ENCODE measurements at regions of chr5 and their contacts with region 1.

Region 1: DNA sequence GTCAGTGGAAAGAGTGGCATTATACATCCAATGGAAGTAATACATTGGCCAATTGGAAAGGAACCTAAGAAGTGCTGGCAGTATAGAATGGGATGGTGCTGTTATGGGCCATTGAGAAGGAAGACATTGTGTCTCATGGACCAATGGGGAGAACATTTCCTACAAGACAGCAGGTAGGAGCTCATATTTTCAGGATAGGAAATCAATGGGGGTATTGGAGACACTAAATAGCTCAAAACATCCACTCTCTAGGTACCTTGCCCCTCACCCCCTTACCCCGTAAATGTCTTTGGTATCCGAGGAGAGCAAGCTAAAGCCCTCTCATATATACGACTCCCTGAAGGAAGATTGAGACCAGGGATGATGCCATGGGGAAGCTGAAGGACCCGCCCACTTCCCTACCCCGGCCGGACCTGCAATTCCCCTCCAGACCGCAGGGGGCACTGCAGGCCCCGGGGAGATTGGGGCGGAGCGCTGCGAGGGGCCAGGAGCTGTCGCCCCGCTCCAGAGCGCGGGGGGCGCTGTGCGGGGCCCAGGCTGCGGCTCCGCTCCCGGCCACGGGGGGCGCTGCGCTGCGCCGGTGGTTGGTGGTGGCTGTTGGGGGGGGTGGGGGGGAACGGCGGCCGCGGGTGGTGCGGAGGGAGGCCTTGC is at the start of gene KDM3B:
- DNase-seq: peak; percentile 86 to 96 (median 92)
- ATAC-seq: peak; percentile 89
- H3K4me3 ChIP-seq: peak within 1 kb of the TSS; percentile 87 to 97
- H3K4me3 Mint-ChIP-seq: peak within 1 kb of the TSS; percentile 97
- H3K27ac ChIP-seq: peak within 1 kb of the TSS; percentile 83 to 89
- H3K27ac Mint-ChIP-seq: peak within 1 kb of the TSS; percentile 97
- H3K4me1 ChIP-seq: peaks cover 34% of the 10 kb centered on the region
- H3K4me1 Mint-ChIP-seq: peaks cover 47% of the 10 kb centered on the region
- H3K27me3 ChIP-seq: no peaks in the 10 kb centered on the region
- H3K27me3 Mint-ChIP-seq: no peaks in the 10 kb centered on the region
- CTCF ChIP-seq: peak; percentile 99
- total RNA-seq, gene KDM3B: 60.2 to 60.3 TPM

Region 2: DNA sequence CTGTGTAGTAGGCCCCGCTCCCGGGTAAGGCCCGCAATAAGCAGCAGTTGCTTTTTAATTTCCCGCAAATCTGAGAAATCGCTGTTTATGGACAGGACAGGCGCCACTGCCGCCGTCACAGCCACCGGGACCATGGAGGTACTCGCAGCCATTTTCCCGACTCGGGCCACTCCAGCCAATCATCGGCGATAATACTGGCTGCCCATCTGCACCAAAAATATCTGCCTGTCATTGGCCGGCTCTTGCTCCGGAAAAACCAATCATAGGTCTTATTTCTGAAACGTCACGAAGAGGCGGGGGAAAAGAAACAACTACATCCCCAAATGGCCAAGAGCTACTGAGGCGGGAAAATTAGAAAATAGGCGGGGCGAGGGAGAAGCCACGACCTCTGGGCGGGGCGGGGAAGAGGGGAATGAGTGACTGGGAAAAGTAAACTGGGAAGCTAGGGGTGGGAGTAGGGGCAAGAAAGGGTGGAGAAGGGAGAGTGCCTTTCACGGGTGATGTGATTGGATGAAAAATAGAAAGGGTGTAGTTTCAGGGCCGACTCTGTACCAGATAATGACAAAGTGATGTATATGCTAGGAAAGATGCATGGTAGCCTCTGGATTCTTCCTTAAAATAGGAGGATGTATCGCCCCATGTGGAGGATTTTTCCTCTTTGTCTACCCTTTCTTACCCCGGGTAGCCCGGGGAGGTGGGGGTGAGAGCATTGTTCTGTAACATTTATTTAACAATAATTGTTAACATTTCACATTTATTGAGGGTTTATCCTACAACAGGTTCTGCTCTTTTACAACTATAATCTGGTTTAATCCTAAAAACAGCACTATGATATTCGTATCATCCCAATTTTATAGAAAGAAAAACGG is 138.8 kb before region 1 on chr5 and contains the start of gene CDC23:
- CTCF ChIA-PET with region 1: interaction called, 5 read pairs
- POLR2A ChIA-PET with region 1: interaction called, 5 read pairs
- intact Hi-C with region 1: loop called (anchors 2 to 5 kb)
- DNase-seq: peak; percentile 76 to 97 (median 89)
- ATAC-seq: peak; percentile 97
- H3K4me3 ChIP-seq: peak within 1 kb of the TSS; percentile 91 to 93
- H3K4me3 Mint-ChIP-seq: peak within 1 kb of the TSS; percentile 100
- H3K27ac ChIP-seq: peak within 1 kb of the TSS; percentile 81 to 86
- H3K27ac Mint-ChIP-seq: peak within 1 kb of the TSS; percentile 98
- H3K4me1 ChIP-seq: peaks cover 18% of the 10 kb centered on the region
- H3K4me1 Mint-ChIP-seq: peaks cover 21% of the 10 kb centered on the region
- H3K27me3 ChIP-seq: no peaks in the 10 kb centered on the region
- H3K27me3 Mint-ChIP-seq: peaks cover 2% of the 10 kb centered on the region
- CTCF ChIP-seq: no peak
- total RNA-seq, gene CDC23: 18.2 to 20.5 TPM

Region 3: GRCh38 chr5:138331449-138332368 is 20.5 kb before region 1 on chr5 and contains the start of gene CDC25C:
- CTCF ChIA-PET with region 1: interaction called, 154 read pairs
- POLR2A ChIA-PET with region 1: interaction called, 145 read pairs
- intact Hi-C with region 1: loop called (anchors 1 kb)
- DNase-seq: peak; percentile 91 to 99 (median 95)
- ATAC-seq: peak; percentile 100
- H3K4me3 ChIP-seq: peak within 1 kb of the TSS; percentile 52 to 69
- H3K4me3 Mint-ChIP-seq: peak within 1 kb of the TSS; percentile 86
- H3K27ac ChIP-seq: peak within 1 kb of the TSS in 1 of 2 experiments; percentile 58
- H3K27ac Mint-ChIP-seq: peak within 1 kb of the TSS; percentile 45
- H3K4me1 ChIP-seq: peaks cover 5% of the 10 kb centered on the region
- H3K4me1 Mint-ChIP-seq: peaks cover 16% of the 10 kb centered on the region
- H3K27me3 ChIP-seq: no peaks in the 10 kb centered on the region
- H3K27me3 Mint-ChIP-seq: no peaks in the 10 kb centered on the region
- CTCF ChIP-seq: no peak
- total RNA-seq, gene CDC25C: not detected

Region 4: GRCh38 chr5:138337685-138338410 is 14.3 kb before region 1 on chr5 and contains the start of gene FAM53C:
- CTCF ChIA-PET with region 1: interaction called, 154 read pairs
- POLR2A ChIA-PET with region 1: interaction called, 145 read pairs
- intact Hi-C with region 1: loop called (anchors 1 kb)
- DNase-seq: peak; percentile 88 to 98 (median 91)
- ATAC-seq: peak; percentile 84
- H3K4me3 ChIP-seq: peak within 1 kb of the TSS; percentile 69 to 85
- H3K4me3 Mint-ChIP-seq: peak within 1 kb of the TSS; percentile 93
- H3K27ac ChIP-seq: peak within 1 kb of the TSS; percentile 95 to 99
- H3K27ac Mint-ChIP-seq: peak within 1 kb of the TSS; percentile 100
- H3K4me1 ChIP-seq: peaks cover 23% of the 10 kb centered on the region
- H3K4me1 Mint-ChIP-seq: peaks cover 41% of the 10 kb centered on the region
- H3K27me3 ChIP-seq: no peaks in the 10 kb centered on the region
- H3K27me3 Mint-ChIP-seq: no peaks in the 10 kb centered on the region
- CTCF ChIP-seq: no peak
- total RNA-seq, gene FAM53C: 99.8 to 99.9 TPM

Region 5: GRCh38 chr5:138369706-138370105 is 17.5 kb after region 1 on chr5:
- CTCF ChIA-PET with region 1: interaction called, 58 read pairs
- POLR2A ChIA-PET with region 1: interaction called, 5 read pairs
- intact Hi-C with region 1: loop called in 1 of 2 experiments (anchors 2 kb)
- DNase-seq: peak in 1 of 9 experiments; percentile 13
- ATAC-seq: no peak
- H3K4me3 ChIP-seq: no peak overlapping the region
- H3K4me3 Mint-ChIP-seq: no peak overlapping the region
- H3K27ac ChIP-seq: no peak overlapping the region
- H3K27ac Mint-ChIP-seq: no peak overlapping the region
- H3K4me1 ChIP-seq: peaks cover 29% of the 10 kb centered on the region
- H3K4me1 Mint-ChIP-seq: peaks cover 56% of the 10 kb centered on the region
- H3K27me3 ChIP-seq: no peaks in the 10 kb centered on the region
- H3K27me3 Mint-ChIP-seq: no peaks in the 10 kb centered on the region
- CTCF ChIP-seq: no peak

Region 6: GRCh38 chr5:138725138-138725833 is 373.1 kb after region 1 on chr5:
- CTCF ChIA-PET with region 1: no interaction called
- POLR2A ChIA-PET with region 1: no interaction called
- intact Hi-C with region 1: no loop called
- DNase-seq: peak in 2 of 9 experiments; percentile 5 to 15
- ATAC-seq: no peak
- H3K4me3 ChIP-seq: no peak overlapping the region
- H3K4me3 Mint-ChIP-seq: no peak overlapping the region
- H3K27ac ChIP-seq: no peak overlapping the region
- H3K27ac Mint-ChIP-seq: no peak overlapping the region
- H3K4me1 ChIP-seq: peaks cover 8% of the 10 kb centered on the region
- H3K4me1 Mint-ChIP-seq: peaks cover 11% of the 10 kb centered on the region
- H3K27me3 ChIP-seq: peaks cover 0 to 12% of the 10 kb centered on the region in 2 experiments
- H3K27me3 Mint-ChIP-seq: peaks cover 57% of the 10 kb centered on the region
- CTCF ChIP-seq: no peak

Region 7: GRCh38 chr5:139273572-139274289 is 921.5 kb after region 1 on chr5:
- CTCF ChIA-PET with region 1: no interaction called
- POLR2A ChIA-PET with region 1: no interaction called
- intact Hi-C with region 1: loop called in 1 of 2 experiments (anchors 5 kb)
- DNase-seq: peak; percentile 73 to 91 (median 83)
- ATAC-seq: peak; percentile 90
- H3K4me3 ChIP-seq: peak overlapping the region; percentile 81 to 86
- H3K4me3 Mint-ChIP-seq: peak overlapping the region; percentile 88
- H3K27ac ChIP-seq: peak overlapping the region; percentile 56 to 57
- H3K27ac Mint-ChIP-seq: peak overlapping the region; percentile 72
- H3K4me1 ChIP-seq: peaks cover 36% of the 10 kb centered on the region
- H3K4me1 Mint-ChIP-seq: peaks cover 50% of the 10 kb centered on the region
- H3K27me3 ChIP-seq: no peaks in the 10 kb centered on the region
- H3K27me3 Mint-ChIP-seq: no peaks in the 10 kb centered on the region
- CTCF ChIP-seq: no peak

Measured in CD8-positive, alpha-beta T cell (primary cell).